ENCODE measurements at regions of chr12 and their contacts with region 1.

Region 1: DNA sequence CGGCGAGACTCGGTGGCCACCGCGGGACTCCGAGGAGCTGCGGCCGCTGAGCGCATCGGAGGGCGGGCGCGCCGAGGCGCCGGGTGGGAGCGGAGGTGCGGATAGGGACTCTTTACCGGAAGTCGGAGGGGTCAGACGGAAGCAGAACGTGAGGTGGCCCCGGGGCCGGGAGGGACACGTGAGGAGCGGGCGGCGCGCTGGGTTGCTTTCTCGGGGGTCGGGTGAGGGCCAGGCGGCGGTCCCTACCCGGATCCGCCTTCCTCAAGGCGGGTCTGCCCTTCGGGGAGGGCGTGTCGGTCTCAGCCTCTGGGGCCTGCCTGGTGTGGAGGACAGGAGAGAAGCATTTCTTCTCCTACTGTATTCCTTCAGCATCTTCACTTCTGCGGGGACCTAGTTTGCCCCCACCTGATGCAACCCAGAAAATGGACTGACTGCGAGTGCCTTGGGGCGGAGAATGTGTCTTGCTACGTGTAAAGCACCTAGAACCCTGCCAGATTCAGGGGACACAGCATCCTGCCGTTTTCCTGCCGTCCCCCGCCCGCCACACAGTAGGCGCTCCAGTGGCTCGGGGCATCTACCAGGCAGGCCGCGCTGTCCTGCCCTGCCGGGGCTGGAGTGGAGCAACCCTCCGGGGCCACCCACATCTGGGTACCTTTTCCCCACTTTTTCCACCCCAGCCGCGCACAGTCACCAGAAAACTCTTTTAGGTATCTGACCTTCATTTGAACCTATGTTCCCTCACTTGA is 517 bp upstream of the ATXN2 start:
- DNase-seq: peak; percentile 68 to 88 (median 84)
- H3K4me3 ChIP-seq: peak overlapping the region; percentile 56 to 97 (median 92)
- H3K27ac ChIP-seq: peak overlapping the region; percentile 68 to 99 (median 95)
- H3K27me3 ChIP-seq: no peaks in the 10 kb centered on the region
- CTCF ChIP-seq: peak in 6 of 56 donors; percentile 3 to 17 (median 15)

Region 2: DNA sequence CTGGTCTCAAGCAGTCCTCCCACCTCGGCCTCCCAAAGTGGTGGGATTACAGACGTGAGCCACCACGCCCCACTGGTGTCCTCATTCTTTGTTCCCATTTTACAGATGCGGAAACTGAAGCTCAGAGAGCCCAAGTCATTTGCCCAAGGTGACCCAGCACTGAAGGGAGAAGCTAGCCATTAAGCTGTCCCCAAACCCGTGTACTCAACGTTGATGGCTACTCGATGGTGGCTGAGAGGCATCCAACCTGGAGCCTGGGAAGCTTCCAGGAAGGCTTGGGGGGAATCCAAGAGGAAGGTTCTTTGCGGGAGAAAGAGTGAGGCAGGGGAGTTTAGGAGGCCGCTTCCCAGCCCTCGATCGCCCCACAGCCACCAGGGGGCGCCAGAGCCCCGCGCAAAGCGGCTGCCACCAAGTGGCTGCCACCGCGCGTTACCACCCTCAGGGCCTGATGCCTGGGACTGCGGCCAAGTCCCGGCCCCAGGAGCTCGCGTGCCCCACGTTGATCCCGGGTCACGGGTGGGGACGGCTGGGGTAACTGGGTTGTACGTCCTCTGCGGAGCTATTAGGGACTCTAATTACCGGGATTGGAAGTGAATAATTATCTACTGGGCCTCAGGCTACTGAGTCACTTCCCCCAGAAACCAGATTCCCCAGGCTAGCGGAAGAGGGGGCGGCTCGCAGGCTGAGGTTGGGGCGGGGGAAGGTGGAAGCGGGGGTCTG is 202.7 kb before region 1 on chr12:
- intact Hi-C with region 1: loop called (anchors 5 to 10 kb)
- DNase-seq: peak; percentile 71 to 90 (median 82)
- H3K4me3 ChIP-seq: peak overlapping the region in 57 of 59 donors; percentile 9 to 66 (median 41)
- H3K27ac ChIP-seq: peak overlapping the region in 30 of 59 donors; percentile 2 to 76 (median 48)
- H3K27me3 ChIP-seq: no peaks in the 10 kb centered on the region
- CTCF ChIP-seq: peak; percentile 95 to 100 (median 100)

Region 3: DNA sequence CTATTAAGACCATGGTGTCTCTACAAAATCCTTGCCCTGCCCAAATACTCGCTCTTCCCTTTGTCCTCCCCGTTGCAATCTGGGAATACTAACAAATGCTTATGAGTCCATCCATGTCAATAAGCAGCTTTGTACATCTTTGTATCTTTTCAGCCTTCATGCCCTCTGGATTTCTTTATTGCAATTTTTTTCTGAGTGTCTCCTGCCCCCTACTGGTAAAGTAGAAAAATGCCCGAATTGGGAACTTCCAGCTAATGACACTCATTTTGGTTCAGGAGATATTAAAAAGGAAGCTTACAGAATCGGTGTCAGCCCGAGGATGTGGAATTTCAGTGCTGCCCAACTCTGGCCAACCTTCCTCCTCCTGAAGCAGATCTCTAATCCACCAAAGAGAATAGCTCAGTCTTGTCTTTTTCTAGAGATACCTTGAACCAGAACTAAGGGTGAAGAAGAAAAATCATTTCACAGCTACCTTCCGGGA is 147.9 kb before region 1 on chr12:
- intact Hi-C with region 1: loop called in 1 of 2 experiments (anchors 5 kb)
- DNase-seq: peak in 3 of 10 donors; percentile 9 to 32 (median 28)
- H3K4me3 ChIP-seq: no peak overlapping the region
- H3K27ac ChIP-seq: peak overlapping the region in 51 of 59 donors; percentile 10 to 88 (median 66)
- H3K27me3 ChIP-seq: no peaks in the 10 kb centered on the region
- CTCF ChIP-seq: peak; percentile 82 to 98 (median 91)

Region 4: GRCh38 chr12:111656016-111656415 is 56.4 kb after region 1 on chr12:
- intact Hi-C with region 1: loop called in 1 of 2 experiments (anchors 10 kb)
- DNase-seq: peak in 1 of 10 donors; percentile 57
- H3K4me3 ChIP-seq: no peak overlapping the region
- H3K27ac ChIP-seq: peak overlapping the region in 26 of 59 donors; percentile 6 to 95 (median 38)
- H3K27me3 ChIP-seq: no peaks in the 10 kb centered on the region
- CTCF ChIP-seq: no peak

Region 5: GRCh38 chr12:111841750-111842555 is 242.3 kb after region 1 on chr12 and contains the start of gene MAPKAPK5:
- intact Hi-C with region 1: loop called in 1 of 2 experiments (anchors 10 kb)
- DNase-seq: peak; percentile 83 to 93 (median 88)
- H3K4me3 ChIP-seq: peak within 1 kb of the TSS; percentile 67 to 100 (median 93)
- H3K27ac ChIP-seq: peak within 1 kb of the TSS in 58 of 59 donors; percentile 60 to 99 (median 92)
- H3K27me3 ChIP-seq: no peaks in the 10 kb centered on the region
- CTCF ChIP-seq: peak in 33 of 56 donors; percentile 4 to 55 (median 32)
- total RNA-seq, gene MAPKAPK5: 38.5 to 72.8 (median 54.5) TPM